Endothelial cell of umbilical vein (primary cell): ENCODE measurements at regions of chr13 and their contacts with region 1.

Region 1: GRCh38 chr13:75760131-75761021 is 124.2 kb downstream of the LMO7 start:
- DNase-seq: peak; percentile 54
- H3K4me3 ChIP-seq: no peak overlapping the region
- H3K27ac ChIP-seq: no peak overlapping the region
- H3K4me1 ChIP-seq: peaks cover 15% of the 10 kb centered on the region
- H3K27me3 ChIP-seq: no peaks in the 10 kb centered on the region
- CTCF ChIP-seq: peak in 1 of 2 donors; percentile 5
- POLR2A ChIP-seq: no peak

Region 2: DNA sequence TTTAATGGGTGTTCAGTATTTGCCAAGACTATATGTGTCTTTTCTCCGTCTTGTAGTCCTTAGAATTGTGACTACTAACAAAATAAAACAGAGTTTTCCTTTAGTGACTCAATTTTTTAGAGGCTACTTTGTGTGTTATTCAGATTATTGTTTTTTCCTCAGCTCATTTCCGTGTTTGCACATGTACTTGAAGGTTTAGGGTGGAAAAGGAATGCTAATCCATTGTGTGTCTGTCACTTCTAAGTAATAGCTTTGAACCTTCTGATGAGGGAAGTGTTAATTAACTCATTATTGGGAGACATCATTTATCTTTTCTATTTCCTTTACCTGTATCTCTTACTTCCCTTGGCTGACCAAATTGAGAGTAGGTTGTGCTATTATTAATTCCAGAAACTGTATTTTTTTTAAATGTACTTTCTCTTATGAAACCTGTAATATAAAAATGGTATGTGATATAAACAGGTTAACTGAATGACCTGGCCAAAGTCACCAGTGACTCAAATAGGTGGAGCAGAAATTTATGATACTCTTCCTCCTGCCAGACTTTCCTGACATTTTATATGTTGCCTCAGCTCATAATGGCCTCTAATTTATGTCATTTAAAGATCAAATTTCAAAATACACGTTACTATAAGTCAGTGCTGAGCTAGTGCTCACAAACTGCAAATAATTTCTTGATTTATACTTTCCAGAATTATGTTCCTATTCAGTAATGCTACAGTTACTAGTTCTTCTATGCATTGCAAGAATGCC is 35.4 kb before region 1 on chr13:
- CTCF ChIA-PET with region 1: interaction called, 9 read pairs
- POLR2A ChIA-PET with region 1: interaction called, 3 read pairs
- dilution Hi-C with region 1: no loop called
- intact Hi-C with region 1: loop called (anchors 2 kb)
- DNase-seq: peak; percentile 80
- H3K4me3 ChIP-seq: peak overlapping the region in 1 of 3 experiments; percentile 5
- H3K27ac ChIP-seq: peak overlapping the region; percentile 45
- H3K4me1 ChIP-seq: peaks cover 17% of the 10 kb centered on the region
- H3K27me3 ChIP-seq: no peaks in the 10 kb centered on the region
- CTCF ChIP-seq: no peak
- POLR2A ChIP-seq: no peak

Region 3: GRCh38 chr13:75870397-75870903 is 110.1 kb after region 1 on chr13:
- CTCF ChIA-PET with region 1: interaction called, 16 read pairs
- POLR2A ChIA-PET with region 1: no interaction called
- dilution Hi-C with region 1: no loop called
- intact Hi-C with region 1: loop called (anchors 5 kb)
- DNase-seq: peak; percentile 36
- H3K4me3 ChIP-seq: peak overlapping the region; percentile 28 to 74 (median 37)
- H3K27ac ChIP-seq: no peak overlapping the region
- H3K4me1 ChIP-seq: peaks cover 4% of the 10 kb centered on the region
- H3K27me3 ChIP-seq: peaks cover 0 to 2% of the 10 kb centered on the region in 2 experiments
- CTCF ChIP-seq: peak; percentile 58 to 59
- POLR2A ChIP-seq: no peak